HCT116 (cell line): ENCODE measurements at regions of chr6 and their contacts with region 1.

Region 1: GRCh38 chr6:16514249-16514648 is 247.0 kb downstream of the ATXN1 start:
- DNase-seq: no peak
- ATAC-seq: peak; percentile 62
- H3K4me3 ChIP-seq: no peak overlapping the region
- H3K27ac ChIP-seq: no peak overlapping the region
- H3K4me1 ChIP-seq: peaks cover 30 to 40% of the 10 kb centered on the region in 2 experiments
- H3K27me3 ChIP-seq: no peaks in the 10 kb centered on the region
- CTCF ChIP-seq: peak; percentile 53 to 69 (median 59); a peak in 5 of 6 replicates
- POLR2A ChIP-seq: no peak
- RAD21 ChIP-seq: peak; percentile 55

Region 2: GRCh38 chr6:15504581-15505350 is 1009.5 kb before region 1 on chr6:
- CTCF ChIA-PET with region 1: no interaction called
- POLR2A ChIA-PET with region 1: no interaction called
- RAD21 ChIA-PET with region 1: no interaction called
- intact Hi-C with region 1: no loop called
- DNase-seq: no peak
- ATAC-seq: no peak
- H3K4me3 ChIP-seq: no peak overlapping the region
- H3K27ac ChIP-seq: no peak overlapping the region
- H3K4me1 ChIP-seq: 0 out of 4 replicates have a peak, but pooled peaks cover 0 to 4% of the 10 kb centered on the region in 2 experiments
- H3K27me3 ChIP-seq: no peaks in the 10 kb centered on the region
- CTCF ChIP-seq: no peak
- POLR2A ChIP-seq: no peak
- RAD21 ChIP-seq: no peak

Region 3: GRCh38 chr6:15588971-15589634 is 925.1 kb before region 1 on chr6:
- CTCF ChIA-PET with region 1: no interaction called
- POLR2A ChIA-PET with region 1: no interaction called
- RAD21 ChIA-PET with region 1: no interaction called
- intact Hi-C with region 1: no loop called
- DNase-seq: no peak
- ATAC-seq: no peak
- H3K4me3 ChIP-seq: no peak overlapping the region
- H3K27ac ChIP-seq: no peak overlapping the region
- H3K4me1 ChIP-seq: no peaks in the 10 kb centered on the region
- H3K27me3 ChIP-seq: no peaks in the 10 kb centered on the region
- CTCF ChIP-seq: no peak
- POLR2A ChIP-seq: no peak
- RAD21 ChIP-seq: no peak

Region 4: GRCh38 chr6:16712931-16713484 is 198.8 kb after region 1 on chr6:
- CTCF ChIA-PET with region 1: interaction called, 6 read pairs
- POLR2A ChIA-PET with region 1: no interaction called
- RAD21 ChIA-PET with region 1: interaction called in 1 of 2 experiments, 3 read pairs
- intact Hi-C with region 1: loop called (anchors 2 kb)
- DNase-seq: peak; percentile 91
- ATAC-seq: peak; percentile 68
- H3K4me3 ChIP-seq: peak overlapping the region; percentile 8 to 38; a peak in 3 of 4 replicates
- H3K27ac ChIP-seq: peak overlapping the region; percentile 89
- H3K4me1 ChIP-seq: peaks cover 33 to 40% of the 10 kb centered on the region in 2 experiments
- H3K27me3 ChIP-seq: no peaks in the 10 kb centered on the region
- CTCF ChIP-seq: peak in 2 of 3 experiments; percentile 47 to 57; a peak in 4 of 6 replicates
- POLR2A ChIP-seq: peak; percentile 35
- RAD21 ChIP-seq: peak; percentile 28

Region 5: GRCh38 chr6:16770701-16771569 is 256.7 kb after region 1 on chr6:
- CTCF ChIA-PET with region 1: interaction called, 12 read pairs
- POLR2A ChIA-PET with region 1: no interaction called
- RAD21 ChIA-PET with region 1: no interaction called
- intact Hi-C with region 1: no loop called
- DNase-seq: peak; percentile 68
- ATAC-seq: peak; percentile 74
- H3K4me3 ChIP-seq: peak overlapping the region in 1 of 2 experiments; percentile 6; a peak in 2 of 4 replicates
- H3K27ac ChIP-seq: peak overlapping the region; percentile 70; the same call in 1 of the 2 replicates
- H3K4me1 ChIP-seq: peaks cover 47 to 57% of the 10 kb centered on the region in 2 experiments
- H3K27me3 ChIP-seq: no peaks in the 10 kb centered on the region
- CTCF ChIP-seq: peak; percentile 86 to 97 (median 96)
- POLR2A ChIP-seq: no peak
- RAD21 ChIP-seq: peak; percentile 71

Region 6: GRCh38 chr6:16964553-16965501 is 450.6 kb after region 1 on chr6:
- CTCF ChIA-PET with region 1: interaction called, 7 read pairs
- POLR2A ChIA-PET with region 1: no interaction called
- RAD21 ChIA-PET with region 1: no interaction called
- intact Hi-C with region 1: loop called (anchors 5 kb)
- DNase-seq: peak; percentile 39
- ATAC-seq: peak; percentile 99
- H3K4me3 ChIP-seq: no peak overlapping the region; a peak in 1 of 4 replicates
- H3K27ac ChIP-seq: no peak overlapping the region
- H3K4me1 ChIP-seq: peaks cover 2 to 8% of the 10 kb centered on the region in 2 experiments; a peak in 3 of 4 replicates
- H3K27me3 ChIP-seq: peaks cover 2% of the 10 kb centered on the region; the same call in 1 of the 2 replicates
- CTCF ChIP-seq: peak; percentile 72 to 97 (median 96); a peak in 5 of 6 replicates
- POLR2A ChIP-seq: no peak
- RAD21 ChIP-seq: peak; percentile 90